ENCODE measurements at regions of chr18 and their contacts with region 1.

Region 1: GRCh38 chr18:3062798-3063680 is 50.1 kb upstream of the LPIN2 start:
- DNase-seq: peak; percentile 42 to 79 (median 72)
- ATAC-seq: peak; percentile 27
- H3K4me3 ChIP-seq: no peak overlapping the region
- H3K4me3 Mint-ChIP-seq: peak overlapping the region; percentile 58
- H3K27ac ChIP-seq: peak overlapping the region; percentile 88 to 95
- H3K27ac Mint-ChIP-seq: peak overlapping the region; percentile 93
- H3K4me1 ChIP-seq: peaks cover 58% of the 10 kb centered on the region
- H3K4me1 Mint-ChIP-seq: peaks cover 67% of the 10 kb centered on the region
- H3K27me3 ChIP-seq: no peaks in the 10 kb centered on the region
- H3K27me3 Mint-ChIP-seq: no peaks in the 10 kb centered on the region
- CTCF ChIP-seq: peak; percentile 85

Region 2: GRCh38 chr18:2932247-2933181 is 130.5 kb before region 1 on chr18:
- CTCF ChIA-PET with region 1: interaction called, 40 read pairs
- POLR2A ChIA-PET with region 1: interaction called, 3 read pairs
- intact Hi-C with region 1: loop called (anchors 1 kb)
- DNase-seq: peak in 6 of 9 experiments; percentile 37 to 82 (median 52)
- ATAC-seq: peak; percentile 79
- H3K4me3 ChIP-seq: no peak overlapping the region
- H3K4me3 Mint-ChIP-seq: no peak overlapping the region
- H3K27ac ChIP-seq: peak overlapping the region in 1 of 2 experiments; percentile 51
- H3K27ac Mint-ChIP-seq: peak overlapping the region; percentile 89
- H3K4me1 ChIP-seq: peaks cover 6% of the 10 kb centered on the region
- H3K4me1 Mint-ChIP-seq: peaks cover 23% of the 10 kb centered on the region
- H3K27me3 ChIP-seq: no peaks in the 10 kb centered on the region
- H3K27me3 Mint-ChIP-seq: no peaks in the 10 kb centered on the region
- CTCF ChIP-seq: peak; percentile 96

Region 3: GRCh38 chr18:3074087-3074486 is 11.0 kb after region 1 on chr18:
- CTCF ChIA-PET with region 1: interaction called, 53 read pairs
- POLR2A ChIA-PET with region 1: interaction called, 3 read pairs
- intact Hi-C with region 1: no loop called
- DNase-seq: peak in 1 of 9 experiments; percentile 43
- ATAC-seq: no peak
- H3K4me3 ChIP-seq: no peak overlapping the region
- H3K4me3 Mint-ChIP-seq: no peak overlapping the region
- H3K27ac ChIP-seq: no peak overlapping the region
- H3K27ac Mint-ChIP-seq: no peak overlapping the region
- H3K4me1 ChIP-seq: no peaks in the 10 kb centered on the region
- H3K4me1 Mint-ChIP-seq: peaks cover 22% of the 10 kb centered on the region
- H3K27me3 ChIP-seq: no peaks in the 10 kb centered on the region
- H3K27me3 Mint-ChIP-seq: no peaks in the 10 kb centered on the region
- CTCF ChIP-seq: no peak

Region 4: GRCh38 chr18:3100498-3101132 is 37.6 kb after region 1 on chr18:
- CTCF ChIA-PET with region 1: interaction called, 13 read pairs
- POLR2A ChIA-PET with region 1: interaction called, 3 read pairs
- intact Hi-C with region 1: loop called in 1 of 2 experiments (anchors 5 kb)
- DNase-seq: no peak
- ATAC-seq: no peak
- H3K4me3 ChIP-seq: no peak overlapping the region
- H3K4me3 Mint-ChIP-seq: no peak overlapping the region
- H3K27ac ChIP-seq: no peak overlapping the region
- H3K27ac Mint-ChIP-seq: no peak overlapping the region
- H3K4me1 ChIP-seq: peaks cover 21% of the 10 kb centered on the region
- H3K4me1 Mint-ChIP-seq: peaks cover 26% of the 10 kb centered on the region
- H3K27me3 ChIP-seq: no peaks in the 10 kb centered on the region
- H3K27me3 Mint-ChIP-seq: no peaks in the 10 kb centered on the region
- CTCF ChIP-seq: no peak

Region 5: GRCh38 chr18:3245853-3246634 is 183.0 kb after region 1 on chr18:
- CTCF ChIA-PET with region 1: interaction called, 25 read pairs
- POLR2A ChIA-PET with region 1: interaction called, 19 read pairs
- intact Hi-C with region 1: loop called (anchors 2 to 5 kb)
- DNase-seq: peak; percentile 44 to 89 (median 78)
- ATAC-seq: peak; percentile 60
- H3K4me3 ChIP-seq: peak overlapping the region; percentile 77 to 90
- H3K4me3 Mint-ChIP-seq: peak overlapping the region; percentile 92
- H3K27ac ChIP-seq: peak overlapping the region; percentile 79 to 89
- H3K27ac Mint-ChIP-seq: peak overlapping the region; percentile 90
- H3K4me1 ChIP-seq: peaks cover 11% of the 10 kb centered on the region
- H3K4me1 Mint-ChIP-seq: peaks cover 39% of the 10 kb centered on the region
- H3K27me3 ChIP-seq: no peaks in the 10 kb centered on the region
- H3K27me3 Mint-ChIP-seq: no peaks in the 10 kb centered on the region
- CTCF ChIP-seq: peak; percentile 84